HCT116 (cell line): ENCODE measurements at regions of chr17 and their contacts with region 1.

Region 1: DNA sequence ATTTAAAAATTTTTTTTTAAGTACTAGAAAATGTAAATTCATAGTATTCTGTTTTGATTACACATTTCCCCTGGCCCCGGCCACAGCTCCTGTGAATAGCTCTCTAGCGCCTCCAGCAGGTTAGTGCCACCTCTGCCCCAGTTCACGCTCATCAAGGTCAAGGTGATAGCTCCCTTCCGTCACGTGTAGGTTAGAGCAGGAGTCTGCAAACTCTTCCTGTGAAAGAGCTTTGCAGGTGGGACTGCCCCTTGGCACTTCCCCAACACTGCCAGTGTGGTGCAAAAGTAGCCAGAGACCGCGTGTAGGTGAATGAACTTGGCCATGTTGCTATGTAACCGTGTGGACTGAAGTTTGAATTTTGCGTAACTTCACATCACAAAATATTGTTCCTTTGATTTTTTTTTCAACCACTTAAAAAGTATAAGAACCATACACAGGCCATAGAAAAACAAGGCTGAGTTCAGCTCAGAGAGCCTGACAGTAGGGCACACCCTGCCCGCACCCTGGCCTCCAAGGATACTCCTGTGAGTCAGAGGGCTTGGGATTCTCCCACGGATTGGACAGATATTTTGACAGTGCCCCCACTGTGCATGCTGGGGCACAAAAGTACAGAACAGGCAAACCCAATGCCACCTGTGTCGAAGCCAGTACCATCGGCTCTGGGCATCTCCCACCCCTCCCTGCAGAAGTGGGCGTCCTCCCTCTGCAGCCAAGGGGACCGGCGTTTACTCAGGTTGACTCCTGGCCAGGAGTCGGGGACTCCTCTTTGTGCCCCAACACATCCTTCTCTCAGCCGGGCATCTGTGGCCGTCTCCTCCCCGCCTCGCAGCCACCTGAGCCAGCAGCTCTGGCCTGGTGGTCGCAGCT is 92.0 kb upstream of the CHMP6 start:
- DNase-seq: peak; percentile 40
- ATAC-seq: peak; percentile 89
- H3K4me3 ChIP-seq: no peak overlapping the region
- H3K27ac ChIP-seq: no peak overlapping the region
- H3K4me1 ChIP-seq: peaks cover 0 to 5% of the 10 kb centered on the region in 2 experiments; a peak in 1 of 4 replicates
- H3K27me3 ChIP-seq: no peaks in the 10 kb centered on the region
- CTCF ChIP-seq: peak; percentile 87 to 99 (median 97)
- POLR2A ChIP-seq: no peak
- RAD21 ChIP-seq: peak; percentile 91

Region 2: DNA sequence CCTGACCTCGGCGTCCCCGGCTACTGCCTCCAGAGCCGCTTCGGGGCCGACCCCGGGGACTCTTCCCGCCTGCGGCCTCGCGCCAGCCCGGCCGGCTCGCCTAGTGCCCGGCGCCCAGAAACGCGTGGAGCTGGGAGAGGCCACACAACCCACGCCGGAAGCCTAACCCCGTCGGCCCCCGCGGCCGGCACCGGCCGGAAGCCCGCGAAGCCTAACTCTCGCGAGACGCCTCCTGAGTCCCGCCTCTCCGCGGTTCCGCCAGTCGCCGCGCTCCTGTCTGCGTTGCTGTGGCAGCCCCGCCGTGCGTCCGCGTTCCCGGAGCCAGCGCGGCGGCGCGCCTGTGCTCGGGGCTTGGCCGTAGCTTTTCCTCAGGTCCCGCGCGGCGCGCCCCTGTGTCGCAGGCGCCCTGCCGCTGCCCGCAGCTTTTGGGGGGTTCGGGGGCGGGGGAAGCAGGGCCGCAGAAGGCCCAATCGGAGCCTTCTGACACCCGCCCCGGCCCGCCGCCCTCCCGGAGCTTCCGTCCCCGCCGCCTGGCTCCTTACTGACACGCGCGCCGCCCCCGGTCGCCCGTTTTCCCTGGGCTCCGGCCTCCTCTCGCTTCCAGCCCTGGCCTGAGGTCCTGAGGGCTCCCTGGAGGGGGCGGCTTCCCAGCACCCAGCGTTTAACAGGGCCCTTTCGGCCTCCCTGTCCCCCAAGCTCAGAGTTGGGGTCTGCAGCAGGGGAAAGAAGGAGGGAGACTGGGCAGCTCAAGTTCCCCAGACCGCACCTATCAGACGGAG is 444.9 kb before region 1 on chr17:
- CTCF ChIA-PET with region 1: interaction called, 13 read pairs
- POLR2A ChIA-PET with region 1: interaction called, 6 read pairs
- RAD21 ChIA-PET with region 1: no interaction called
- intact Hi-C with region 1: loop called (anchors 10 kb)
- DNase-seq: peak; percentile 96
- ATAC-seq: peak; percentile 92
- H3K4me3 ChIP-seq: peak overlapping the region; percentile 78 to 82
- H3K27ac ChIP-seq: peak overlapping the region; percentile 91
- H3K4me1 ChIP-seq: peaks cover 11 to 40% of the 10 kb centered on the region in 2 experiments; a peak in 3 of 4 replicates
- H3K27me3 ChIP-seq: no peaks in the 10 kb centered on the region
- CTCF ChIP-seq: no peak
- POLR2A ChIP-seq: peak; percentile 63
- RAD21 ChIP-seq: no peak

Region 3: GRCh38 chr17:80761110-80761871 is 138.3 kb before region 1 on chr17:
- CTCF ChIA-PET with region 1: no interaction called
- POLR2A ChIA-PET with region 1: no interaction called
- RAD21 ChIA-PET with region 1: no interaction called
- intact Hi-C with region 1: loop called (anchors 2 kb)
- DNase-seq: peak; percentile 72
- ATAC-seq: peak; percentile 90
- H3K4me3 ChIP-seq: peak overlapping the region in 1 of 2 experiments; percentile 43; a peak in 2 of 4 replicates
- H3K27ac ChIP-seq: peak overlapping the region; percentile 51; the same call in 1 of the 2 replicates
- H3K4me1 ChIP-seq: peaks cover 31 to 43% of the 10 kb centered on the region in 2 experiments
- H3K27me3 ChIP-seq: no peaks in the 10 kb centered on the region
- CTCF ChIP-seq: no peak
- POLR2A ChIP-seq: no peak
- RAD21 ChIP-seq: peak; percentile 49

Region 4: DNA sequence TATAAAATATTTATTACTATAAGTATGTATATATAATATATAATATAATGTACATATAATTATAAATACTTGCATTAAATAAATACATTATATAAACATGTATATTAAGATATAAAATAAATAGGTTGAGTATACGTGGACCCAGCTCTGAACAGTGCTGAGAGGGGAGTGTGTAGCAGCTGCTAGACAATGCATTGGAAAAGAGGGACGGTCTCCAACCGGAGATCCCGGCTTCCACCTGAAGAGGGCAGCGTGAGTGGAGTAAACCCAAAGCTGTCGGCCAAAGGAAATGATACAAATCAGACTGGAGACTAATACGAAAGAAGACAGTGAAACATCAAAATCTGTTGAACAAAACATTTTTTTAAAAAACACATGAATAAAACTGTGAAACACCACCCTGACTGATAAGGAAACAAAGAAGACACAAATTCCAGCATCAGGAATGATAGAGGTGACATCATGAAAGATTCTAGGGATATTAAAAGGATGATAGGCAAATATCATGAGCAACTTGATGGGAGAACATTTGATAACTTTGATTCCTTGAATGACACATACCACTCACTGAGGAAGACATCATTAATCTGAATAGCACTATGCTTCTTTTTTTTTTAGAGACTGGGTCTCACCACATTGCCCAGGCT is 33.4 kb before region 1 on chr17:
- CTCF ChIA-PET with region 1: interaction called, 32 read pairs
- POLR2A ChIA-PET with region 1: no interaction called
- RAD21 ChIA-PET with region 1: no interaction called
- intact Hi-C with region 1: loop called (anchors 2 kb)
- DNase-seq: peak; percentile 37
- ATAC-seq: peak; percentile 95
- H3K4me3 ChIP-seq: no peak overlapping the region
- H3K27ac ChIP-seq: no peak overlapping the region
- H3K4me1 ChIP-seq: no peaks in the 10 kb centered on the region
- H3K27me3 ChIP-seq: no peaks in the 10 kb centered on the region
- CTCF ChIP-seq: peak; percentile 73 to 86 (median 84); a peak in 5 of 6 replicates
- POLR2A ChIP-seq: no peak
- RAD21 ChIP-seq: peak; percentile 75

Region 5: GRCh38 chr17:81217491-81217890 is 317.9 kb after region 1 on chr17:
- CTCF ChIA-PET with region 1: no interaction called
- POLR2A ChIA-PET with region 1: no interaction called
- RAD21 ChIA-PET with region 1: no interaction called
- intact Hi-C with region 1: no loop called
- DNase-seq: no peak
- ATAC-seq: no peak
- H3K4me3 ChIP-seq: no peak overlapping the region
- H3K27ac ChIP-seq: no peak overlapping the region
- H3K4me1 ChIP-seq: peaks cover 14 to 18% of the 10 kb centered on the region in 2 experiments
- H3K27me3 ChIP-seq: no peaks in the 10 kb centered on the region
- CTCF ChIP-seq: no peak
- POLR2A ChIP-seq: no peak
- RAD21 ChIP-seq: no peak